ENCODE measurements at regions of chr14 and their contacts with region 1.

Region 1: GRCh38 chr14:62491146-62491545 is 554.1 kb downstream of the KCNH5 start:
- DNase-seq: no peak
- H3K4me3 ChIP-seq: no peak overlapping the region
- H3K27ac ChIP-seq: no peak overlapping the region
- H3K4me1 ChIP-seq: no peaks in the 10 kb centered on the region
- H3K27me3 ChIP-seq: no peaks in the 10 kb centered on the region
- CTCF ChIP-seq: no peak

Region 2: GRCh38 chr14:62313212-62313611 is 177.9 kb before region 1 on chr14:
- CTCF ChIA-PET with region 1: no interaction called
- POLR2A ChIA-PET with region 1: no interaction called
- intact Hi-C with region 1: no loop called
- DNase-seq: no peak
- H3K4me3 ChIP-seq: no peak overlapping the region
- H3K27ac ChIP-seq: no peak overlapping the region
- H3K4me1 ChIP-seq: no peaks in the 10 kb centered on the region
- H3K27me3 ChIP-seq: no peaks in the 10 kb centered on the region
- CTCF ChIP-seq: no peak

Region 3: GRCh38 chr14:62329427-62329826 is 161.7 kb before region 1 on chr14:
- CTCF ChIA-PET with region 1: no interaction called
- POLR2A ChIA-PET with region 1: no interaction called
- intact Hi-C with region 1: no loop called
- DNase-seq: no peak
- H3K4me3 ChIP-seq: no peak overlapping the region
- H3K27ac ChIP-seq: no peak overlapping the region
- H3K4me1 ChIP-seq: no peaks in the 10 kb centered on the region
- H3K27me3 ChIP-seq: no peaks in the 10 kb centered on the region
- CTCF ChIP-seq: no peak

Region 4: GRCh38 chr14:62364800-62365280 is 126.3 kb before region 1 on chr14:
- CTCF ChIA-PET with region 1: no interaction called
- POLR2A ChIA-PET with region 1: no interaction called
- intact Hi-C with region 1: loop called (anchors 1 kb)
- DNase-seq: no peak
- H3K4me3 ChIP-seq: no peak overlapping the region
- H3K27ac ChIP-seq: no peak overlapping the region
- H3K4me1 ChIP-seq: no peaks in the 10 kb centered on the region
- H3K27me3 ChIP-seq: no peaks in the 10 kb centered on the region
- CTCF ChIP-seq: no peak

Region 5: GRCh38 chr14:62443796-62444195 is 47.4 kb before region 1 on chr14:
- CTCF ChIA-PET with region 1: no interaction called
- POLR2A ChIA-PET with region 1: no interaction called
- intact Hi-C with region 1: no loop called
- DNase-seq: no peak
- H3K4me3 ChIP-seq: no peak overlapping the region
- H3K27ac ChIP-seq: no peak overlapping the region
- H3K4me1 ChIP-seq: no peaks in the 10 kb centered on the region
- H3K27me3 ChIP-seq: no peaks in the 10 kb centered on the region
- CTCF ChIP-seq: no peak

Region 6: DNA sequence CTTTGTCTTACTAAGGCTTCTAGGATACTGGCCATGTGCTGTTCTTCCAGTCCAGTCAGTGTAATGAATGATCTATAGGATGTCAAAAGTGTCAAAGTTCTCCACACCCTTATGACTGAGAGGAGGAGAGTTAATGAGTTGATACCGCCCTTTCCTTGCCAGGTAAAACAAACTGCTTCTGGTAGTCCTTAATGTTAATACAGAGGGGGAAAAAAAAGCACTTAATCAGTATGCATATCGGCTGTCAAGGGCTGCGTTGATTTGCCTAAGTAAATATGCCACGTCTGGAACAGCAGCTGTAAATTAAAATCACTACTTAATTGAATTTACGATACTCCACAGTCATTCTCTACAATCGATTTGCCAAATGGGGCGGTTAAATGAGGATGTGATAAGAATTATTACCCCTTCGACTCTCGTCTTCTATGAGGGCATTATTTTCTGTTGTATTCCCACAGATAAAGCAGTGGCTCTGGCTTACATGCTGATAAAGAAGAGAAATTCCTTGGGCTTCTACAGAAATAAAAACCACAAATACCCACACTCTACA is 138.1 kb after region 1 on chr14:
- CTCF ChIA-PET with region 1: no interaction called
- POLR2A ChIA-PET with region 1: no interaction called
- intact Hi-C with region 1: no loop called
- DNase-seq: no peak
- H3K4me3 ChIP-seq: no peak overlapping the region
- H3K27ac ChIP-seq: no peak overlapping the region
- H3K4me1 ChIP-seq: no peaks in the 10 kb centered on the region
- H3K27me3 ChIP-seq: no peaks in the 10 kb centered on the region
- CTCF ChIP-seq: no peak

Measured in PC-9 (cell line).